ENCODE measurements at regions of chr2 and their contacts with region 1.

Region 1: DNA sequence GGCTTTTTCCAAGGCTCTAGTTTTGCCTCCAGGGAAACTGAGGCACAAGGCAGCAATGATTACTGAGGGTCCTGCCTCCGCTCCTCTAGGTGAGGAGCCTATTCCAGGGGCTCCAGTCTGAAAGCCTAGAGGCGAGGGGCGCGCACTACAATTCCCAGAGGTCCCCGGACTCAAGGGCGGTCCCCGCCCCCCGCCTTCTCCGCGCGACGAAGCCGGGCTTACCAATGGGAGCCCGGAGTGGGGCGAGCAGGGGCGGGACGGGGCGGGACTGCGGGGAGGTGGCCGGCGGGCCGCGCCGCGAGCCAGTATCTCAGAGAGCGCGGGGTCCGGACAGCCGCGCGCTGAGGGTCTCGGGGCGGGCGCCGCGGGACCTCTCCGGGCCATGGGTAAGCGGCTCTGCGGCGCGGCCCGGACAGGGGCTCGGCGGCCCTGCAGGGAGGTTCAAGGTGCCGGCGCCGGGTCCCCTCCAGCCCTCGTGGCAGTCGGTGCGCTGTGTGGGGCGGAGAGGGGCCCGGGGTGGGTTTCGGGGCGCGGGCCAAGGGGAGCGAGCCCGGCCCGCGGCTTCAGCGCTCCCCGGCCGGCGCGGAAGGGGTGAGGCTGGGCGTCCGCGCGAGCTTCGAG is at the start of gene ARID5A:
- DNase-seq: peak; percentile 83
- total RNA-seq, gene ARID5A: 3.6 TPM in 2 replicates

Region 2: DNA sequence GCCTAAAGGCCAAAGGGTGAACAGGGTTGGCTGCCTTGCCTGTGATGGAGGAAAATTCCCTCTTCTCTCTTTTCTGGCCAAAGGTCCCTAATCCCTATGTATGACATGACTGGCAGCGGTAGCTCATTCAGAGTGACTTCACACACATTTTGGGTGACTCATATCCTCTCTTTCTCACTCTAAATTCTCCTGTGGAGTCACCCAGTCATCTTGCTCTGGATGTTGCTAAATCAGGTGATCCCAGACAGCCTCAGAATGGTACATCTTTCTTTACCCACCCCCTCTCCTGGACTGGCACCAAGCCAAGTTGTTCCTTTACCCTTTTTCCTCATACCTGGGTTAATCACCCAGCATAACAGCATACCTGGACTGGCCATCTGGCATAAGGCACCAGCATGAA is 108.6 kb before region 1 on chr2:
- in situ Hi-C with region 1: loop called (anchors 25 kb)
- DNase-seq: no peak

Region 3: DNA sequence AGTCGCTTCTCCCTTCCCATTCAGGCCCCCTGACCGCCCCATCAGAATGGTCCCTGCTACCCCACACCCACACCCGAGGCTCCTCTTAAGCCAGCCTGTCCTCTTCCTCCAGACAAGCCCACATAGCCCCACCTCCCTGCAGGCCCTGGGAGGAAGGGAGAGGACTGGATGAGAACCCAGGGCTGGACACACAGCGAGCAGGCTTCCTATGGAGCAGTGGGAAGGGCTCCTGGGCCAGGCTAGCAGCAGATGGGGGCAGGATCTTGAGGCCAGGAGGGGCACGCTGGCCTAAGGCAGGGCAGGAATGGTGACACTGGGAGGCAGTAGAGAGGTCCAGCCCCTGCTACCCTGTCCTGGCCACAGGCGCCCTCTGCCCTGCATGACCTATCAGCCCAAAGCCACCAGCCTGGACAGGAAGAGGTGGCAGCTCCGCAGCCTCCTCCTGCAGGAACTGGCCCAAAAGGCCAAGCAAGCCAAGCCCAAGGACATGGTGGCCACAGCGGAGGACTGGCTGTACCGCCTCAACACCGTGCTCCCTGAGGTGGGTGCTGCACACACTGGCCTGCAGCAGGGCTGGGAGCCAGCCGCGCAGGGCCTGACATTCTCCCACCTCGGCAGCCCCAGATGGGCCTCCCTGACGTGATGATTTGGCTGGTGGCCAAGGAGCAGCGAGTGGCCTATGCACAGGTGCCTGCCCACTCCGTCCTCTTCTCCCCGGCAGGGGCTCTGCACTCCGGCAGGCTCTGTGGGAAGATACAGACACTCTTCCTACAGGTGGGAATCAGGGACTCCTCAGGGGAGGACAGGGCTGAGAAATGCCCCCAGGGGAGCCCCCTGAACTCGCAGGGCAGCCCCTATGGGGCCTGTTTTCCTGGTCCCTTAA is 149.3 kb after region 1 on chr2:
- in situ Hi-C with region 1: no loop called
- DNase-seq: no peak

Measured in SK-MEL-5 (cell line).